B cell (primary cell): ENCODE measurements at regions of chr6 and their contacts with region 1.

Region 1: GRCh38 chr6:34248727-34249551 is at the start of gene SMIM29:
- DNase-seq: peak; percentile 97
- ATAC-seq: peak; percentile 91
- H3K4me3 ChIP-seq: peak within 1 kb of the TSS; percentile 78 to 97 (median 91)
- H3K4me3 Mint-ChIP-seq: peak within 1 kb of the TSS; percentile 99
- H3K27ac ChIP-seq: peak within 1 kb of the TSS; percentile 92 to 93
- H3K27ac Mint-ChIP-seq: peak within 1 kb of the TSS; percentile 97
- H3K4me1 ChIP-seq: peaks cover 14 to 32% of the 10 kb centered on the region in 2 donors
- H3K4me1 Mint-ChIP-seq: peaks cover 41% of the 10 kb centered on the region
- H3K27me3 ChIP-seq: no peaks in the 10 kb centered on the region
- H3K27me3 Mint-ChIP-seq: no peaks in the 10 kb centered on the region
- CTCF ChIP-seq: peak; percentile 89
- total RNA-seq, gene SMIM29: 41.1 and 43.6 TPM in 2 replicates

Region 2: DNA sequence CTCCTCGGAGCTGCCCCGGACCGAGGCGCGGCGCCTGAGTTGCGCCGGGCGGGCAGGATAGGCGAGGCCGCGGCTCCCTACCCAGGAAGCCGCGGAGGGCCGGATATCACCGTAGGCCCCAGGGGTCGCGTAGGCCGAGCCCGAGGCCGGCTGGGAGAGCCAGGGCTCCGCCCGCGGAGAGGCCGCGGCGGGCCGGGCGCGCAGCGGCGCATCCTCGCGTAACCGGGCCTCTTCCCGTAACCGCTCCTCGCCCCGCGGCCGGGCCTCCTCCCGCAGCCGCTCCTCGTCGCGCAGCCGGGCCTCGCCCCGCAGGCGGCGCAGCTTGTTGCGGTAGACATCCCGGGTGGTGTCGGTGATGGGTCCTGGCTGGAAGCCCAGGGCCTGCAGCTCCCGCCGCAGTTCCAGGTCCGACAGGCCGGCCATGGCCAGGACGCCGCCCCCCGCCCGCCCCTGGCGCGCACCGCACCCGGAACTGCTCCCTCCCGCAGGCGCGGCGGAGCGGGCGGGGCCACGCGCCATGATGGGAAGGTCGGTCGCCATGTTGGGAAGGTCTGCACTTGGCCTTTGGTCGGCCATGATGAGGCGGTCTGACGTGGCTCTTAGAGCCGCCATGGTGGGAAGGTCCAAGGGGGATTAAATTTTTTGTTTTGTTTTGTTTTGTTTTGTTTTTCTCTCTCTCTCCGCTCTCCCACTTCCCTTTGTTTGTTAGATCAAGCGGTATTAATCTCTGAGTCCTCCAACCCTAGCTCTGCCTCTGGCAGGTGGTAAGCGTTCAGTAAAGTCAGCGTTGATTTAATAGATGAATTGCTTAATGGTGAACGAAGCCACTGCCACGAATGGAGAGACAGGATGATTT is 460.0 kb before region 1 on chr6 and contains the start of gene LEMD2:
- CTCF ChIA-PET with region 1: no interaction called
- POLR2A ChIA-PET with region 1: no interaction called
- intact Hi-C with region 1: loop called (anchors 5 kb)
- DNase-seq: peak; percentile 95
- ATAC-seq: peak; percentile 92
- H3K4me3 ChIP-seq: peak within 1 kb of the TSS; percentile 11 to 89 (median 73)
- H3K4me3 Mint-ChIP-seq: peak within 1 kb of the TSS; percentile 93
- H3K27ac ChIP-seq: peak within 1 kb of the TSS; percentile 78 to 89
- H3K27ac Mint-ChIP-seq: peak within 1 kb of the TSS; percentile 97
- H3K4me1 ChIP-seq: peaks cover 34 to 37% of the 10 kb centered on the region in 2 donors
- H3K4me1 Mint-ChIP-seq: peaks cover 47% of the 10 kb centered on the region
- H3K27me3 ChIP-seq: peaks cover 0 to 5% (median 0%) of the 10 kb centered on the region in 4 experiments
- H3K27me3 Mint-ChIP-seq: peaks cover 4% of the 10 kb centered on the region
- CTCF ChIP-seq: no peak
- total RNA-seq, gene LEMD2: 113 and 122 TPM in 2 replicates

Region 3: DNA sequence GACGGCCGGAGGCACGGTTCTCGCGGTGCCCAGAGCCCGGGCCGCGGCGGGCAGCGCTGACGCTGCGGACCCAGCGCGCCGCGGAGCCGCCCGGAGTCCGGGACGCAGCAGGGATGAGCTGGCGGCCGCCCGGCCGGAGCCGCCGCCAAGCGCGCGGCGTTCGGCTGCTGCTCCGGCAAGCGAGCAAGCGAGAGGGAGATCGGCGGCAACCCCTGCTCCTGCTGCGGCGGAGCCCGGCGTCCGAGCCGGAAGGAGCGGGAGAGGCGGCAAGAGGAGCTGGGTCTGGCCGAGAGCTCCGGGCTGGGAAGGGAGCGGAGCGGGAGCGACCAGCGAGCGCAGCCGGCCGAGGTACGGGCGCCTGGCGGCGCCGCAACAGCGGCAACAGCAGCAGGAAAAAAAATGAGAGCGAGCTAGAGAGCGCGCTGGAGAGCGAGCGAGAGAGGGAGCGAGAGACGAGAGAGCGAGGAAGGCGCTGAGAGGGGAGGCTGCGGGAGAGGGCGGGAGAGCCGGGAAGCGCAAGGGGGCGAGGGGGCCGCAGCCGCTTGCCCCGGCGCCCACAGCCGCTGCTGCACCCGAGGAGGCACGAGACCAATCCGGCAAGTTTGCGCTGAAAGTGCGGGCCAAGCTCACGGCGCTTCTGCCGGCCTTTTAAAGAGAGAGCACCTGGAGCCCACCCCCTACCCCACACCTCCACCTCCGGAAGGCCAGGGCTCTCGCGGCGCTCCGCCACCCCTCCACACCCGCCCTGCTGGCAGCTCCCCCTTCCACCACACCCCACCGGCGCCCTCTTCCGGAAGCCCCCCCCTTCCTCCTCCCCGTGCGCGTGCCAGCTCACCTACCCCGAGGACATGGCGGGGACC is 103.5 kb before region 1 on chr6:
- CTCF ChIA-PET with region 1: no interaction called
- POLR2A ChIA-PET with region 1: no interaction called
- intact Hi-C with region 1: no loop called
- DNase-seq: peak; percentile 56
- ATAC-seq: peak; percentile 45
- H3K4me3 ChIP-seq: peak overlapping the region in 4 of 5 experiments; percentile 26 to 62 (median 52)
- H3K4me3 Mint-ChIP-seq: peak overlapping the region; percentile 81
- H3K27ac ChIP-seq: no peak overlapping the region
- H3K27ac Mint-ChIP-seq: peak overlapping the region; percentile 42
- H3K4me1 ChIP-seq: peaks cover 35 to 40% of the 10 kb centered on the region in 2 donors
- H3K4me1 Mint-ChIP-seq: peaks cover 25% of the 10 kb centered on the region
- H3K27me3 ChIP-seq: peaks cover 0 to 70% (median 36%) of the 10 kb centered on the region in 4 experiments
- H3K27me3 Mint-ChIP-seq: peaks cover 61% of the 10 kb centered on the region
- CTCF ChIP-seq: no peak

Region 4: DNA sequence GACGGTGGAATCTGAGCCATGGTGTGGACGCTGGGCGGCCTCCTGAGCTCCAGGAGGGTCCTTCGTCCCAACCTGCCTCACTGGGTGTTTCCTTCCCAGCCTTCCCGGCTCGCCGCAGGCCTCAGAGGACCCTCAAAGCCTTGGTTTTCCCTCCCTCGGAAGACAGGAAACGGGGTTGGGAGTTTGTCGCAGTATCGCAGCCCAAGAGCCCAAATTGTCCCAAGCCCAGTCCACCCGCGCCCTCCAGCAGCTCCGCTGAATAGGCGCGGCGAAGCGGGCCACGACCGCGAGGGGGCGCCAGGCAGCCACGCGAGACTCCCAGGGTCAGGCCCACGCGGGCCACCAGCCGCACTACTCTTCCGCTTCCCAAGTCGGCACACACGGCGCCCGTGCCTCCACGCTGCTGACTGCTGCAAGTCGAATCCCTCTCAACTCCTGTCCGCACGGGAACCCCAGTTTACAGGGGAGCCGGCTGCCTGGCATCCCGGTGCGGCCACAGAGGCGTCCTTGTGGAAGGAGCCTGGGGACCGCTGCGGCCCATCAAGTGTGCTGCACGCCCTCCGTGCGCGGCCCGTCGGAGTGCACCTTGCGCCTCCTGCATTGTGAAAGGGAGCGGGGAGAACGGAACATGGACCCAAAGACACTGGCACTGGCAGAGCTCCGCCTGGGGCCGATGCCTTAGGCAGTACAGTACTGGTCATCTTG is 52.7 kb before region 1 on chr6:
- CTCF ChIA-PET with region 1: interaction called, 86 read pairs
- POLR2A ChIA-PET with region 1: interaction called, 12 read pairs
- intact Hi-C with region 1: loop called (anchors 1 kb)
- DNase-seq: peak; percentile 92
- ATAC-seq: peak; percentile 98
- H3K4me3 ChIP-seq: peak overlapping the region; percentile 21 to 83 (median 70)
- H3K4me3 Mint-ChIP-seq: peak overlapping the region; percentile 86
- H3K27ac ChIP-seq: peak overlapping the region in 1 of 2 donors; percentile 52
- H3K27ac Mint-ChIP-seq: peak overlapping the region; percentile 77
- H3K4me1 ChIP-seq: peaks cover 7 to 12% of the 10 kb centered on the region in 2 donors
- H3K4me1 Mint-ChIP-seq: peaks cover 12% of the 10 kb centered on the region
- H3K27me3 ChIP-seq: no peaks in the 10 kb centered on the region
- H3K27me3 Mint-ChIP-seq: no peaks in the 10 kb centered on the region
- CTCF ChIP-seq: peak; percentile 94

Region 5: GRCh38 chr6:34236131-34236996 is 12.6 kb before region 1 on chr6 and contains the start of gene HMGA1:
- CTCF ChIA-PET with region 1: interaction called, 6 read pairs
- POLR2A ChIA-PET with region 1: interaction called, 29 read pairs
- intact Hi-C with region 1: loop called (anchors 1 kb)
- DNase-seq: peak; percentile 96
- ATAC-seq: peak; percentile 76
- H3K4me3 ChIP-seq: peak within 1 kb of the TSS; percentile 64 to 93 (median 88)
- H3K4me3 Mint-ChIP-seq: peak within 1 kb of the TSS; percentile 92
- H3K27ac ChIP-seq: peak within 1 kb of the TSS; percentile 96 to 98
- H3K27ac Mint-ChIP-seq: peak within 1 kb of the TSS; percentile 98
- H3K4me1 ChIP-seq: peaks cover 22 to 30% of the 10 kb centered on the region in 2 donors
- H3K4me1 Mint-ChIP-seq: peaks cover 34% of the 10 kb centered on the region
- H3K27me3 ChIP-seq: no peaks in the 10 kb centered on the region
- H3K27me3 Mint-ChIP-seq: no peaks in the 10 kb centered on the region
- CTCF ChIP-seq: no peak
- total RNA-seq, gene HMGA1: 66.4 and 72.3 TPM in 2 replicates

Region 6: GRCh38 chr6:34392497-34393190 is 143.7 kb after region 1 on chr6 and contains the start of gene NUDT3:
- CTCF ChIA-PET with region 1: interaction called, 48 read pairs
- POLR2A ChIA-PET with region 1: interaction called, 6 read pairs
- intact Hi-C with region 1: loop called (anchors 1 kb)
- DNase-seq: peak; percentile 99
- ATAC-seq: peak; percentile 87
- H3K4me3 ChIP-seq: peak within 1 kb of the TSS; percentile 71 to 97 (median 87)
- H3K4me3 Mint-ChIP-seq: no peak within 1 kb of the TSS
- H3K27ac ChIP-seq: peak within 1 kb of the TSS; percentile 71 to 88
- H3K27ac Mint-ChIP-seq: peak within 1 kb of the TSS; percentile 87
- H3K4me1 ChIP-seq: peaks cover 16 to 31% of the 10 kb centered on the region in 2 donors
- H3K4me1 Mint-ChIP-seq: peaks cover 25% of the 10 kb centered on the region
- H3K27me3 ChIP-seq: no peaks in the 10 kb centered on the region
- H3K27me3 Mint-ChIP-seq: no peaks in the 10 kb centered on the region
- CTCF ChIP-seq: peak; percentile 79
- total RNA-seq, gene NUDT3: 37.4 and 40.1 TPM in 2 replicates

Region 7: DNA sequence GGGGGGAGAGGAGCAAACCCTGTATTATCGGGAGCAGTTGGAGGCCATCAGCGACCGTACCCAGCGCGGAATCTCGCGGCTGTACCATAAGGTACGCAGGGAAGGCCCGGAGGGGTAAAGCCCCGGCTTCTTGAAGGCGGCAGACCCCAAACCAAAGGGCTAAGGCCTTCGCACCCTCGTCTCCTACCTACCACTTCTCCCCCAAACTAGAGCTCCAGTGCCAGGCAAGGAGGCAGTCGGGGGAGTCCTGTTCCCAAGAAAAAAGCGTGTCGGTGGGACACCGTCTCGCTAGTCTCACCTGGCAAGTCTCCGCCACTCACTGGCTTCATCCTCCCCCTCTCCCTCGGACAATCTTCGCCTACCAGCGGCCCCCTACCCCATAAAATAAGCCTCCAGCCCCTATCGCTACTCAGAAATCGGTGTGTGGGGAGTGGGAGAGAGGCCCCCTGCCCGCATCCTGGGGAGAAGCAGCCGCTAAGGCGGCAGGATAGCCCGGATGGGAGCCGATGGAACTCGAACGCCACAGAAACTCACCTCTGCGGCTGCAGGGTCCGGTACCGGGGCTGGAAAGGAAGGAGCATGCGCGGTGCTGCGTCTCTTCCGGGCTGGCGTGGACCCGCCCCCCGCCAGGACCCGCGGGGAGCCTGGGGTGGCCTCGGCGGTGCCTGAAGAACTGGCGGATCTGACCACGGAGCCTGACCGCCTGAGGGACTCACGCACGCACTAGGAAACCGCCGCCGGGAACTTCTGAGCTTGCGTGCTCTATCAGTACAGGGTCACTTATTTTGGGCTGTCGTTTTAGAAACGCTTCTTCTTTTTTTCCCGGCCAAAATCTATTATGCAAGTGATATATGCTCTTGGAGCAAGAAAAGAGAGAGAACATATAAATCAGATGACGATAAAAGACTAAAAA is 176.8 kb after region 1 on chr6 and contains the start of gene RPS10:
- CTCF ChIA-PET with region 1: interaction called, 261 read pairs
- POLR2A ChIA-PET with region 1: interaction called, 7 read pairs
- intact Hi-C with region 1: loop called (anchors 1 kb)
- DNase-seq: peak; percentile 94
- ATAC-seq: peak; percentile 99
- H3K4me3 ChIP-seq: peak within 1 kb of the TSS; percentile 80 to 94 (median 90)
- H3K4me3 Mint-ChIP-seq: peak within 1 kb of the TSS; percentile 86
- H3K27ac ChIP-seq: peak within 1 kb of the TSS; percentile 77 to 82
- H3K27ac Mint-ChIP-seq: peak within 1 kb of the TSS; percentile 95
- H3K4me1 ChIP-seq: peaks cover 10 to 23% of the 10 kb centered on the region in 2 donors
- H3K4me1 Mint-ChIP-seq: peaks cover 21% of the 10 kb centered on the region
- H3K27me3 ChIP-seq: no peaks in the 10 kb centered on the region
- H3K27me3 Mint-ChIP-seq: no peaks in the 10 kb centered on the region
- CTCF ChIP-seq: no peak
- total RNA-seq, gene RPS10: 2,661 and 2,707 TPM in 2 replicates

Region 8: GRCh38 chr6:35139908-35140655 is 891.1 kb after region 1 on chr6:
- CTCF ChIA-PET with region 1: interaction called, 8 read pairs
- POLR2A ChIA-PET with region 1: no interaction called
- intact Hi-C with region 1: loop called (anchors 1 kb)
- DNase-seq: peak; percentile 76
- ATAC-seq: no peak
- H3K4me3 ChIP-seq: no peak overlapping the region
- H3K4me3 Mint-ChIP-seq: peak overlapping the region; percentile 42
- H3K27ac ChIP-seq: no peak overlapping the region
- H3K27ac Mint-ChIP-seq: no peak overlapping the region
- H3K4me1 ChIP-seq: peaks cover 9 to 18% of the 10 kb centered on the region in 2 donors
- H3K4me1 Mint-ChIP-seq: peaks cover 18% of the 10 kb centered on the region
- H3K27me3 ChIP-seq: peaks cover 0 to 17% (median 8%) of the 10 kb centered on the region in 4 experiments
- H3K27me3 Mint-ChIP-seq: peaks cover 18% of the 10 kb centered on the region
- CTCF ChIP-seq: peak; percentile 94